ENCODE measurements at regions of chr2 and their contacts with region 1.

Region 1: DNA sequence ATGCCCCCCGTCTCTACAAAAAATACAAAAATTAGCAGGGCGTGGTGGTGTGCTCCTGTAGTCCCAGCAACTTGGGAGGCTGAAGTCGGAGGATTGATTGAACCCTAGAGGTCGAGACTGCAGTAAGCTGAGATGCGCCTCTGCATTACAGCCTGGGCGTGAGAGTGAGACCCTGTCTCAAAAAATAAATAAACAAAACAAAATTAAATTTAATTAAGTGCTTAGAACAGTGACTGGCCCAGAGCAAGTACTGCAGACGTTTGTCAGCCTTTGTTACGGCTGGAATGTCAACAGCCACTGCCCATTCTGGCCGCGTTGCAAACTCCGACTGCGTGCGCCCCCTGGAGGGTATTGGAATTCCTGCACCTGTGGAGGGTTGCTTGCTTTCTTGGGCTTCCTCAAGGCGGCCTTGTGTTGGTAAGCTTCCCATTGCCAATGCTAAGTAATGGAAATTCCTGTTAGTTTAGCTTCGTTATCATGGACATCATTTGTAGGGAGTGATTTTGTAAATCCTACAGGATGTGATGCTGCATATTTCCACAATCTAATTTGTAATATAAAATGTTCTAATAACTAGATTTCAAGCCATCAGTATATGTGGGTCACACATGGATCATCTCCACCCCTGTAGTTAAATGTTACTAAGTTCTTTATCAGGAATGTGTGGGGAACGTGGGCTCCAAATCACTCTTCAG is 15.9 kb upstream of the ATP6V1B1 start:
- DNase-seq: peak; percentile 28 to 78 (median 61)
- ATAC-seq: peak; percentile 86
- H3K4me3 ChIP-seq: no peak overlapping the region
- H3K4me3 Mint-ChIP-seq: no peak overlapping the region
- H3K27ac ChIP-seq: no peak overlapping the region
- H3K27ac Mint-ChIP-seq: no peak overlapping the region
- H3K4me1 ChIP-seq: no peaks in the 10 kb centered on the region
- H3K4me1 Mint-ChIP-seq: no peaks in the 10 kb centered on the region
- H3K27me3 ChIP-seq: no peaks in the 10 kb centered on the region
- H3K27me3 Mint-ChIP-seq: peaks cover 25 to 43% (median 27%) of the 10 kb centered on the region in 5 donors

Region 2: GRCh38 chr2:70861777-70862625 is 57.8 kb before region 1 on chr2:
- CTCF ChIA-PET with region 1: interaction called, 5 read pairs
- POLR2A ChIA-PET with region 1: no interaction called
- intact Hi-C with region 1: loop called in 1 of 2 experiments (anchors 1 kb)
- DNase-seq: peak; percentile 45 to 80 (median 66)
- ATAC-seq: peak; percentile 94
- H3K4me3 ChIP-seq: no peak overlapping the region
- H3K4me3 Mint-ChIP-seq: peak overlapping the region in 3 of 10 donors; percentile 24 to 57 (median 49)
- H3K27ac ChIP-seq: no peak overlapping the region
- H3K27ac Mint-ChIP-seq: no peak overlapping the region
- H3K4me1 ChIP-seq: no peaks in the 10 kb centered on the region
- H3K4me1 Mint-ChIP-seq: peaks cover 0 to 6% (median 4%) of the 10 kb centered on the region in 7 donors
- H3K27me3 ChIP-seq: no peaks in the 10 kb centered on the region
- H3K27me3 Mint-ChIP-seq: peaks cover 22 to 54% (median 29%) of the 10 kb centered on the region in 5 donors

Region 3: GRCh38 chr2:70871398-70872211 is 48.2 kb before region 1 on chr2:
- CTCF ChIA-PET with region 1: interaction called, 4 read pairs
- POLR2A ChIA-PET with region 1: no interaction called
- intact Hi-C with region 1: loop called (anchors 1 kb)
- DNase-seq: peak; percentile 38 to 83 (median 69)
- ATAC-seq: peak; percentile 98
- H3K4me3 ChIP-seq: peak overlapping the region; percentile 23
- H3K4me3 Mint-ChIP-seq: peak overlapping the region in 8 of 10 donors; percentile 37 to 74 (median 52)
- H3K27ac ChIP-seq: no peak overlapping the region
- H3K27ac Mint-ChIP-seq: no peak overlapping the region
- H3K4me1 ChIP-seq: peaks cover 8 to 9% of the 10 kb centered on the region in 2 donors
- H3K4me1 Mint-ChIP-seq: peaks cover 0 to 7% (median 4%) of the 10 kb centered on the region in 7 donors
- H3K27me3 ChIP-seq: peaks cover 5 to 14% of the 10 kb centered on the region in 2 donors
- H3K27me3 Mint-ChIP-seq: peaks cover 31 to 46% (median 44%) of the 10 kb centered on the region in 5 donors

Region 4: DNA sequence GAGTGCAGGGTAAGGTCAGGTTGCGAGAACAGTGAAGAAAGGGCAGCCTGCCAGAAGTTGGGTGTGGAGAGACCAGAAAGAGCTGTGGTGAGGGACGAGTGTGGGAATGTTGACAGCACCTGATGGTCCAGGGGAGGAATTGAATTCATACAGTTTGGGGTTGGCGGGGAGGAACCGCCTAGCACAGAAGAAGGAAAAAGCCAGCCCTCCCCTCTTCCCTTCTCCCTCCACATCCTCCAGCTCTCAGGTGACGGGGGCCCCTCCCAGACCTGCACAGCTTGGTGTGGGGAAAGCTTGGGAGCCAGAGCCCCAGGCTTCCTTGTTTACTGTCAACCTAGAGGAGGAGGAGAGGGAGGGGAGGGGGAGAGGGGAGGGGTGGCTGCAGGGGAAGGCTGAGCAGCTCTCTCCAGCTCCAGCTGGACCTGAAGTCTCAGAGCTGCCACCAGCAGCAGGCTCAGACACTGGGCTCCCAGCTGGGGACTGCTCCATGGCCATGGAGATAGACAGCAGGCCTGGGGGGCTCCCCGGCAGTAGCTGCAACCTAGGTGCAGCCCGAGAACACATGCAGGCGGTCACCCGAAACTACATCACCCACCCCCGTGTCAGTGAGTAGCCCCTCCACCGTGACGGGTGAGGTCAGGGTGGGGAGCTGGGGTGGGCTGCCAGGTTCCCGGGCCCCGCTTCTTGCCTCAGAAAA is 15.8 kb after region 1 on chr2 and contains the start of gene ATP6V1B1:
- CTCF ChIA-PET with region 1: no interaction called
- POLR2A ChIA-PET with region 1: no interaction called
- intact Hi-C with region 1: no loop called
- DNase-seq: peak in 1 of 9 donors; percentile 1
- ATAC-seq: no peak
- H3K4me3 ChIP-seq: no peak within 1 kb of the TSS
- H3K4me3 Mint-ChIP-seq: no peak within 1 kb of the TSS
- H3K27ac ChIP-seq: no peak within 1 kb of the TSS
- H3K27ac Mint-ChIP-seq: no peak within 1 kb of the TSS
- H3K4me1 ChIP-seq: no peaks in the 10 kb centered on the region
- H3K4me1 Mint-ChIP-seq: peaks cover 0 to 4% (median 0%) of the 10 kb centered on the region in 7 donors
- H3K27me3 ChIP-seq: no peaks in the 10 kb centered on the region
- H3K27me3 Mint-ChIP-seq: peaks cover 4 to 17% (median 12%) of the 10 kb centered on the region in 5 donors
- total RNA-seq, gene ATP6V1B1: not detected

Measured in naive thymus-derived CD4-positive, alpha-beta T cell (primary cell).